ENCODE measurements at regions of chr9 and their contacts with region 1.

Region 1: GRCh38 chr9:2872257-2872935 is 28.5 kb upstream of the PUM3 start:
- DNase-seq: no peak
- ATAC-seq: no peak
- H3K4me3 Mint-ChIP-seq: no peak overlapping the region
- H3K27ac Mint-ChIP-seq: no peak overlapping the region
- H3K4me1 Mint-ChIP-seq: no peaks in the 10 kb centered on the region
- H3K27me3 Mint-ChIP-seq: peaks cover 15% of the 10 kb centered on the region
- CTCF ChIP-seq: no peak

Region 2: DNA sequence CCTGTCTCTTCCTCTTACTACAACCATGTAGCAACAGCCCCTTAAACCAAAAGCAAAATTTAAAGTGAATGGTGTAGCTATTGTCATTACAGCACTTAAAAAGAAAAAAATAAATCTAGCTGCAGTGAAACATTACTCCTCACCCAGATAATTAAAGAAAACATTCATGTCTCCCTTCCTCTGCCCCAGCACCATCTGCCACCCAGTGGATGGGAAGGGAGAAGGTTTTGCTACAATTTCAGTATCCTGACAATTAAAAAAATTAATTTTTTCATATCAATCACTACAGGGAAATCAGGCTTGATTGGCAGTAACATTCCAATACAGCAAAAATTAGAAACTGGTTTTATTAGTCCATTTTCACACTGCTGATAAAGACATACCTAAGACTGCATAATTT is 118.9 kb after region 1 on chr9:
- CTCF ChIA-PET with region 1: no interaction called
- POLR2A ChIA-PET with region 1: no interaction called
- intact Hi-C with region 1: loop called (anchors 10 kb)
- DNase-seq: no peak
- ATAC-seq: no peak
- H3K4me3 Mint-ChIP-seq: no peak overlapping the region
- H3K27ac Mint-ChIP-seq: no peak overlapping the region
- H3K4me1 Mint-ChIP-seq: no peaks in the 10 kb centered on the region
- H3K27me3 Mint-ChIP-seq: peaks cover 6% of the 10 kb centered on the region
- CTCF ChIP-seq: no peak

Measured in activated CD8-positive, alpha-beta T cell treated with anti-CD3 and anti-CD28 coated beads for 36 hours (primary cell).